MCF 10A (cell line): ENCODE measurements at regions of chr6 and their contacts with region 1.

Region 1: GRCh38 chr6:25490018-25490801 is 161.8 kb upstream of the SCGN start:
- DNase-seq: peak; percentile 88
- H3K4me3 Mint-ChIP-seq: no peak overlapping the region
- H3K27ac Mint-ChIP-seq: peak overlapping the region; percentile 86
- H3K4me1 Mint-ChIP-seq: peaks cover 8% of the 10 kb centered on the region
- H3K27me3 Mint-ChIP-seq: no peaks in the 10 kb centered on the region
- CTCF ChIP-seq: peak; percentile 70

Region 2: DNA sequence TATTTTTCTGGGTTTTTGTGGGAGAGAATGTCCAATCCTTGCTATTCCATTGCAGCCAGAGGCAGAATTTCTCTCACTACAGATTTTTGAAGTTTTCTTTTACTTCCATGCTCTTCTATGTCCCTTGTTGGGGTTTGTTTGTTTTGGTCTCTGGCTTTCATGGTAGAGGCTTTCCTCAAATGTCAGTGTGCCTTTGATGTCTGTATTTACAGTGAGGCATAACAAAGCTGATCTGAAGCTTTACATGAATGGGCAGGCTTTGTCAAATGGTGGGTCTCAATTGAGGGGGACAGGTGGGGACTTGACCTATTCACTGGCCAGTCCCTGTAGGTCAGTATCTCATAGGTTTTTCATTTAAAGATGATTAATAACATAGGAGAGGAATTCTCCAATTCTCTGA is 219.7 kb before region 1 on chr6:
- CTCF ChIA-PET with region 1: interaction called, 107 read pairs
- POLR2A ChIA-PET with region 1: interaction called, 16 read pairs
- intact Hi-C with region 1: loop called (anchors 1 kb)
- DNase-seq: no peak
- H3K4me3 Mint-ChIP-seq: no peak overlapping the region
- H3K27ac Mint-ChIP-seq: no peak overlapping the region
- H3K4me1 Mint-ChIP-seq: peaks cover 5% of the 10 kb centered on the region
- H3K27me3 Mint-ChIP-seq: no peaks in the 10 kb centered on the region
- CTCF ChIP-seq: no peak

Region 3: DNA sequence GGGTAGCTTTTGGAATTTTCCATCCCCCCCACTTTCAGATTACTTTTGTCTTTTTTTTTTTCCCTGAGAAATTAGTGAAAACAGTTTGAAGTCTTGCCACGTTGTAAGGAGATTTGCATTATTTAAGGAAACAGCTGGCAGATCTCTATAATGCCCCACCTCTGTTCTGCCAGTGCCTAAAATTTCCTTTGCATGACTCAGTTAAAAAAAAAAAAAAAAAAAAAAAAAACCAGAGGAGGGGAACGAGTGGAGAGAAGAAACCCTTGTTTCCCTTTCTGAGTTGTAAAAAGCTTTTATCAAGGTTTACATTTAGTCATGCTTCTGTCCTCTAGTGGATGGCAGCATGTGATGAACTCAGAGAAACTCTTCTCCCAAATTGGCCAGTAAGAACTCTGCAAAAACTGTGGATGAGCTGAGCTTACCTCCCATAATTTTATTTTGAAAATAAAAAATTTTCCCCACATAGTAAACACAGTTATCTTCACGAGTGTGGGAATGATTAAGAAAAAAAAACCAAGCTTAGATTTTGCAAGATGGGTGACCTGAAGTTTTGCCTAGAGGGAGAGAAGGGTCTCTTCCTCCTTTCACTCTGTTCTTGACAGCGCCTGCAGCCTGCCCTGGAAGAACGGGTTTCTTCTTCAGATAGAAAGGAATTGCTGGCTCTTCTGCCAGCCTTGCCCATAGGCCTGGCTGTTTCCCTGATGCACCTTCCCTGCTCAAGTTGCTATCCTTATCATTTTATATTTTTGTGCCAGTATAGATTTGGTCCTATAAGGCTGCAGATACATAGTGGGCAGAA is 177.3 kb before region 1 on chr6:
- CTCF ChIA-PET with region 1: interaction called, 10 read pairs
- POLR2A ChIA-PET with region 1: interaction called, 3 read pairs
- intact Hi-C with region 1: no loop called
- DNase-seq: peak; percentile 70
- H3K4me3 Mint-ChIP-seq: peak overlapping the region; percentile 69
- H3K27ac Mint-ChIP-seq: peak overlapping the region; percentile 90
- H3K4me1 Mint-ChIP-seq: peaks cover 32% of the 10 kb centered on the region
- H3K27me3 Mint-ChIP-seq: no peaks in the 10 kb centered on the region
- CTCF ChIP-seq: no peak

Region 4: GRCh38 chr6:25534942-25535631 is 44.9 kb after region 1 on chr6:
- CTCF ChIA-PET with region 1: interaction called, 10 read pairs
- POLR2A ChIA-PET with region 1: no interaction called
- intact Hi-C with region 1: no loop called
- DNase-seq: no peak
- H3K4me3 Mint-ChIP-seq: no peak overlapping the region
- H3K27ac Mint-ChIP-seq: no peak overlapping the region
- H3K4me1 Mint-ChIP-seq: no peaks in the 10 kb centered on the region
- H3K27me3 Mint-ChIP-seq: no peaks in the 10 kb centered on the region
- CTCF ChIP-seq: no peak

Region 5: GRCh38 chr6:25556516-25556915 is 66.3 kb after region 1 on chr6:
- CTCF ChIA-PET with region 1: interaction called, 10 read pairs
- POLR2A ChIA-PET with region 1: interaction called, 3 read pairs
- intact Hi-C with region 1: loop called (anchors 5 kb)
- DNase-seq: peak; percentile 83
- H3K4me3 Mint-ChIP-seq: no peak overlapping the region
- H3K27ac Mint-ChIP-seq: no peak overlapping the region
- H3K4me1 Mint-ChIP-seq: peaks cover 5% of the 10 kb centered on the region
- H3K27me3 Mint-ChIP-seq: no peaks in the 10 kb centered on the region
- CTCF ChIP-seq: peak; percentile 69

Region 6: DNA sequence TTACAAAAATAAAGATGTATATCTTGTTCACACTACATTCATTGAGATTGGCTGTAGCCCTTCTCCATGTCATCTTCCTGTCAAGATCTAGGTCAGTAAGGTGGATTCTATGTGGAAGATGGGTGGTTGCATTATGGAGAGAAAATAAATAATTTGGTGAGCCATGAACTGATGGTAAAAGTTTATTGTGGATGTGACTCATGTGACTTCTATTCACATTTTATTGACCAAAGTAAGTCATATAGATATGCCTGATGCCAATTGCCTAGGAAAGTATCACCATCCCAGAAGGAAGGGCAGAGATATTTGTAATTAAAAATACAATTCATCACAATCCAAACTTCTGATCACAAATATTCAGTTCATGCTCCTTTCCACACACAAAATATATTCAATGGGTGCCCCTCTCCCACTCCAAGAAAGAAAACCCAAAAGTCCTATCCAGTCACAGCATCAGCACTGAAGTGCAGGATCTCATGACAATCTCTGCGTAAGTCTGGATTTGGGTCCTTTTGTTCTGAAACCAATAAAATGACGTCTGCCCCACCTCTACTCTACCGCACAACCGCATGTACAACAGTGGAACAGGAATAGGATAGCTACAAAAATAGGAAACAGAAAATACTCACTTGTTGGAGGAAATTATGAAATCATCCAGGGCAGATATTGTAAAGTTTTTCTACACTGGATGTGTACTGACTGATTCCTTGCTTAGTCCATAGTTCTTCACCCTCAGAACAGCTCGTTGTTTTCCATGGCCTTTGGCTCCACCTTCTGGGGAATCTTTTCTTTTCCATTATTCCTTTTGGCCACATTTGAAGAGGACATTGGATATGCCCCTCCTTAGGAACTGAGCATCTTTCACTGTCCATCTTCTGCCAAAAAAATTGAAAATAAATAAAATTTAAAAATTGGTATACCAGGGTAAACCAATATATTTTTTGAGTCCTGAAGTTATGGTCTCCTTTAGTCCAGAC is 400.0 kb after region 1 on chr6:
- CTCF ChIA-PET with region 1: interaction called, 3 read pairs
- POLR2A ChIA-PET with region 1: interaction called, 3 read pairs
- intact Hi-C with region 1: loop called (anchors 1 kb)
- DNase-seq: peak; percentile 75
- H3K4me3 Mint-ChIP-seq: no peak overlapping the region
- H3K27ac Mint-ChIP-seq: no peak overlapping the region
- H3K4me1 Mint-ChIP-seq: no peaks in the 10 kb centered on the region
- H3K27me3 Mint-ChIP-seq: no peaks in the 10 kb centered on the region
- CTCF ChIP-seq: peak; percentile 60